CD14-positive monocyte (primary cell): ENCODE measurements at regions of chr9 and their contacts with region 1.

Region 1: GRCh38 chr9:136363606-136364370 is at the start of gene DNLZ:
- DNase-seq: peak; percentile 79 to 89 (median 88)
- H3K4me3 ChIP-seq: peak within 1 kb of the TSS; percentile 64 to 86 (median 65)
- H3K4me3 Mint-ChIP-seq: peak within 1 kb of the TSS; percentile 86 to 89
- H3K27ac ChIP-seq: peak within 1 kb of the TSS; percentile 26 to 64
- H3K27ac Mint-ChIP-seq: peak within 1 kb of the TSS in 6 of 7 donors; percentile 73 to 93 (median 90)
- H3K4me1 ChIP-seq: peaks cover 35 to 42% of the 10 kb centered on the region in 2 donors
- H3K4me1 Mint-ChIP-seq: peaks cover 24% of the 10 kb centered on the region
- H3K27me3 ChIP-seq: no peaks in the 10 kb centered on the region
- H3K27me3 Mint-ChIP-seq: peaks cover 1 to 2% (median 2%) of the 10 kb centered on the region in 3 donors
- CTCF ChIP-seq: peak; percentile 100
- polyA plus RNA-seq, gene DNLZ: 5.1 to 20.5 (median 10.5) TPM

Region 2: DNA sequence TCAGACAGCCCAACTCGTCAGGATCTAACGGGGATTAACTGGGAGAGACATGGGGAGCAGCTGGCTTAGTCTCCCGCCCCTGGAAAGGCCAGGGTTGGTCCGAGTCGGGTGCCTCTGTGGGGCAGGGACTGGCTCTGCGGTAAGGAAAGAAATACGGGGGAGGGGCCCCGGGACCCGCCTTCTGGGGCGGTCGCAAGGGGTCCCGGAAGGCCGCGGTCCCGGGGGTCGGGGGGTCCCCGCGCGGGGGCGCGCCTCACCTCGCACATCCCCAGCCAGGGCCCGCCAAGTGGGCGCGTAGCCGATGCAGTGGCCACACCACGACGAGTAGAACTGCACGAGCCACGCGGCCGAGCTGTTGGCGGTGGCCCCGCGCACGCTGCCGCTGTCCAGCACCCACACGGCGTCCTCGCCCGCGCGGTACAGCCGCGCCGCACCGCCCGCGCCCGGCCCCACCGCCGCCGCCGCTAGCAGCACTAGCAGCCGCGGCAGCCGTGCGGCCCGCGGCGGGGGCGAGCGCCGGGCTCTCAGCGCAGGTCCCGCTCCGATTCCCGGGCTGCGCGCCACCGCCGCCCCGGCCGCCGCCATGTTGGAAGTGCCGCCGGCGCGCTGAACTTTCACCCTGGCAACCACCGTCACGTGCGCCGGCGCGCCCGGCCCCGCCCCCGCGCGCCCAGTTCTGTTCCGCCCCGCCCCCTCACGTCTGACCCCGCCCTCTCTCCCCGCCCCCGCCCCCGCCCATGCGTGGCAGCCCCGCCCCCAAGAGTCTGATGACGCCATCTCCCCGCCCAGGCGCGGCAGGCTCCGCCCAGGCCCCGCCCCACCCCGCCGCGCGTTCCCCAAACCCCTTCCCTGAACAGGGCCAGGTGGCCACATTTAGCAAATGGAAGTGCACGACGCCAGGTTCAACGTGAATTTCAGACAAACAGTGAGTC is 118.3 kb before region 1 on chr9 and contains the start of gene QSOX2:
- intact Hi-C with region 1: loop called in 1 of 2 experiments (anchors 5 kb)
- DNase-seq: peak; percentile 75 to 89 (median 76)
- H3K4me3 ChIP-seq: peak within 1 kb of the TSS; percentile 36 to 82 (median 79)
- H3K4me3 Mint-ChIP-seq: peak within 1 kb of the TSS; percentile 81 to 89
- H3K27ac ChIP-seq: no peak within 1 kb of the TSS
- H3K27ac Mint-ChIP-seq: peak within 1 kb of the TSS in 5 of 7 donors; percentile 58 to 84 (median 78)
- H3K4me1 ChIP-seq: peaks cover 18 to 23% of the 10 kb centered on the region in 2 donors
- H3K4me1 Mint-ChIP-seq: peaks cover 38% of the 10 kb centered on the region
- H3K27me3 ChIP-seq: no peaks in the 10 kb centered on the region
- H3K27me3 Mint-ChIP-seq: peaks cover 6 to 9% (median 8%) of the 10 kb centered on the region in 3 donors
- CTCF ChIP-seq: no peak
- polyA plus RNA-seq, gene QSOX2: 0.03 to 8.4 (median 0.17) TPM

Region 3: GRCh38 chr9:136400038-136400834 is 36.4 kb after region 1 on chr9 and contains the start of gene SNAPC4:
- intact Hi-C with region 1: loop called in 1 of 2 experiments (anchors 5 kb)
- DNase-seq: peak; percentile 79 to 89 (median 86)
- H3K4me3 ChIP-seq: peak within 1 kb of the TSS; percentile 47 to 88 (median 77)
- H3K4me3 Mint-ChIP-seq: peak within 1 kb of the TSS; percentile 83 to 88
- H3K27ac ChIP-seq: peak within 1 kb of the TSS in 1 of 2 donors; percentile 62
- H3K27ac Mint-ChIP-seq: peak within 1 kb of the TSS in 5 of 7 donors; percentile 30 to 52 (median 44)
- H3K4me1 ChIP-seq: peaks cover 17 to 23% of the 10 kb centered on the region in 2 donors
- H3K4me1 Mint-ChIP-seq: peaks cover 19% of the 10 kb centered on the region
- H3K27me3 ChIP-seq: no peaks in the 10 kb centered on the region
- H3K27me3 Mint-ChIP-seq: peaks cover 0 to 4% (median 4%) of the 10 kb centered on the region in 3 donors
- CTCF ChIP-seq: peak; percentile 94
- polyA plus RNA-seq, gene SNAPC4: 0.59 to 6.7 (median 1.2) TPM

Region 4: DNA sequence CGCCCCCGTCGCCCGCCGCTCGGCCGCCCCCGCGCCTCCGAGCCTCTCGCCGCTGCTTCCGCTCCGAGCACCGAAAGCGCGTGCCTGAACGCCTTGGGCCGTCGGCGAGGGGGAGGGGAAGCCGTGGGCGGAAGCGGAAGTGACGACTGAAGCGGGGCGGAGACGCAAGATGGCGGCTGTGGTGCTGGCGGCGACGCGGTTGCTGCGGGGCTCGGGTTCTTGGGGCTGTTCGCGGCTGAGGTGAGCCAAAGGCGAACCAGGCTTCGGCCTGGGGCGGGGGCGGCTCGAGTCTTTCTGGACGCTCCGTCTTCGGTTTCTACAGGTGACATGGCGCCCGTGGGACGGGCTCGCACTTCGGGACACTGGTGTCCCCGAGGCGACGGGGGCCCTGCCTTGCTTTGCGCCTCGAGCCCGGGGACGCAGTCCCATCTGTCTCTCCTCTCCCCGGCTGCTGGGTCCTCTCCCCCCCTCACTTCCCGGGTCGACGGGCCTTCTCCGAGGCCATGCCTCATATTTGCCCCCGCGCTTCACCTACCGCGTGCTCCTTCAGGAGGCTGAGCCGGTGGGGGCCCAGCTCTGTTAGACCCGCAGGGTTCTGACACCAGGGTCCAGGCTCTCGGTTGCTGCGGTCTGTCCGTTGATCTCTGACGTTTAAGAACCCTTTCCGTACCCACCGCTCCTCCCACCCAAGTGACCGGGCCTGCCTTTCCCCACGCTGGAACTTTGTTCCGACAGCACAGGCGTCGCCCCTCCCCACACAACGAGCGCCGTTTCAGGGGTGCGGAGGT is 46.9 kb after region 1 on chr9 and contains the starts of genes ENTR1 and PMPCA:
- intact Hi-C with region 1: loop called in 1 of 2 experiments (anchors 5 kb)
- DNase-seq: peak; percentile 89 to 92 (median 91)
- H3K4me3 ChIP-seq: peak within 1 kb of the TSS; percentile 66 to 99 (median 85)
- H3K4me3 Mint-ChIP-seq: peak within 1 kb of the TSS; percentile 86 to 91
- H3K27ac ChIP-seq: peak within 1 kb of the TSS; percentile 74 to 96
- H3K27ac Mint-ChIP-seq: peak within 1 kb of the TSS; percentile 91 to 98 (median 95)
- H3K4me1 ChIP-seq: peaks cover 22 to 25% of the 10 kb centered on the region in 2 donors
- H3K4me1 Mint-ChIP-seq: peaks cover 26% of the 10 kb centered on the region
- H3K27me3 ChIP-seq: no peaks in the 10 kb centered on the region
- H3K27me3 Mint-ChIP-seq: peaks cover 0 to 3% (median 0%) of the 10 kb centered on the region in 3 donors
- CTCF ChIP-seq: no peak
- polyA plus RNA-seq, gene ENTR1: 3.3 to 60.0 (median 9.6) TPM
- polyA plus RNA-seq, gene PMPCA: 23.1 to 58.8 (median 24.9) TPM